Psoas muscle (tissue), 8 donors: ENCODE measurements at regions of chr19 and their contacts with region 1.

Region 1: DNA sequence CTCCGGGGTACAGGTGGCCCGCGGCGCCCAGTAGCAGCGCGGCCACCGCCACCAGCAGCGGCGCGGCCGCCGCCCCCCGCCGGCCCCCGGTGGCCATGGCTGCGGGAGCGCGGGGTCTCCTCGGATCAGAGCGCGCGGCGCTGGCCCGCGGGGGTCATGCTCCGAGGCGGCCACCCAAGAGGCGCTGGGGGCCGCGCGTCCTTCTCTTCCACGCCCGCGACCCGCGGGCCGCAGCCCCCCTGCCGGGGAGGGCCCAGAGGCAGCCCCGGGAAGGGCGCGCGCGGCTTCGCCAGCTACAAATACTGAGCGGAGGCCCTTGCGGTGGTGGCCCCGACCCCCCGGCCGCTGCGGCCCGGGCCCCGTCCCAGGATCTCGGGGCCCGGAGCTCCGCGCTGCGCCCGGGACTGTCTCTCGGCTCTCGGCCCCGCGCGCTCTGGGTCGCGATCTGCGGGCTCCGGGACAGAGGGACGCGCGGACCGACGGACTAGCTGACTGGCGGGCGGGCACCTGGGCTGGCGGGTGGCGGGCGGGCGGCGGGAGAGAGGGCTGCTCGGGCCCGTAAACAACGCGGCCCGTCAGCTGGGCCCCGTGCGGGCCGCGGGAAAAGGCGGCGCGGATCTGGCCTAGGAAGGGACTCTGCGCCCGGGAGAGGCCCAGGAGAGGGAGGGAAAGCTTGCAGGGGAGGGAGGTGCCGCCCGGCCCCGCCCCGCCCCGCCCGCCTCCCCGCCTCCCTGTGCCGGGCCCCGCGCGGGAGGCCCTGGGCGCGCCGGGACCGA is at the start of gene INSR:
- DNase-seq: peak; percentile 92 to 95
- ATAC-seq: peak; percentile 92 to 96 (median 93)
- H3K4me3 ChIP-seq: peak within 1 kb of the TSS; percentile 98
- H3K27ac ChIP-seq: peak within 1 kb of the TSS; percentile 98
- H3K4me1 ChIP-seq: peaks cover 17% of the 10 kb centered on the region
- H3K27me3 ChIP-seq: no peaks in the 10 kb centered on the region
- CTCF ChIP-seq: no peak
- total RNA-seq, gene INSR: 48.5 to 95.1 (median 66.3) TPM

Region 2: DNA sequence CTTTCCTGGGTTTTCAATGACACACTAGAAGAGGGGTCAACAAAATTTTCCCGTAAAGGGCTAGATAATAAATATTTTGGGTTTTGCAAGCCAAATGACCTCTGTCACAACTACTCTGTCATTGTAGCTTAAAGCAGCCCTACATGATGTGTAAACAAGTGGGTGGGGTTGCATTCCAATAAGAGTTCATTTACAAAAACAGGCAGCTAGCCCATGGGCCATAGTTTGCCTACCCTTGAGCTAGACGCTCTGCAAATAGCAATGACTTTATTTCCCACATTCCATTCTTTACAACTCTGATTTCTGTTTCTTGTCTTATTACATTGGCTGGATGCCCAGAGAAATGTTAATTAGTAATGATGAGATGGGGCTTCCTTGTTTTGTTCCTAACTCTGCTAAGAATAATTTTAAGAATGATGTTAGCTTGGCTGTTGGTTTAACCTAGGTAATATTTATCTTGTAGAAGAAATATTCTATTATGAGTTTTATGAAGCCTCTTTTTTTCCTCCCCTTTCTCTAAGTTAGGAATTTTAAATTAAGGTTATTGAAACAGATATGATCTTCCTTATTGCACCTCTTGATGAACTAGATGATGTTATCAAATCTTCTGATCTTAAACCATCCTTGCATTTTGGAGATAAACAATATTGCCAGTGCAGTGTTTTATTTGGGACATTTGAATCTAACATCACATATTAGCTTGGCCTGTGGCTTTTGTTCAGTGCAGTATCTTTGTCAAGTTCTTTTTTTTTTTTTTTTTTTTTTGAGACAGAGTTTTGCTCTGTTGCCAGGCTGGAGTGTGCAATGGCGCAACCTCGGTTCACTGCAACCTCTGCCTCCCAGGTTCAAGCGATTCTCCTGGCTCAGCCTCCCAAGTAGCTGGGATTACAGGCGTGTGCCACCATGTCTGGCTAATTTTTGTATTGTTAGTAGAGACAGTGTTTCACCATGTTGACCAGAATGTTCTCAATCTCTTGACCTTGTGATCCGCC is 148.2 kb before region 1 on chr19:
- intact Hi-C with region 1: loop called (anchors 5 kb)
- DNase-seq: no peak
- ATAC-seq: no peak
- H3K4me3 ChIP-seq: no peak overlapping the region
- H3K27ac ChIP-seq: peak overlapping the region; percentile 78
- H3K4me1 ChIP-seq: peaks cover 15% of the 10 kb centered on the region
- H3K27me3 ChIP-seq: no peaks in the 10 kb centered on the region
- CTCF ChIP-seq: no peak

Region 3: GRCh38 chr19:7152568-7152967 is 141.4 kb before region 1 on chr19:
- intact Hi-C with region 1: loop called (anchors 5 kb)
- DNase-seq: no peak
- ATAC-seq: peak in 2 of 4 donors; percentile 12
- H3K4me3 ChIP-seq: no peak overlapping the region
- H3K27ac ChIP-seq: peak overlapping the region; percentile 46
- H3K4me1 ChIP-seq: no peaks in the 10 kb centered on the region
- H3K27me3 ChIP-seq: no peaks in the 10 kb centered on the region
- CTCF ChIP-seq: no peak

Region 4: DNA sequence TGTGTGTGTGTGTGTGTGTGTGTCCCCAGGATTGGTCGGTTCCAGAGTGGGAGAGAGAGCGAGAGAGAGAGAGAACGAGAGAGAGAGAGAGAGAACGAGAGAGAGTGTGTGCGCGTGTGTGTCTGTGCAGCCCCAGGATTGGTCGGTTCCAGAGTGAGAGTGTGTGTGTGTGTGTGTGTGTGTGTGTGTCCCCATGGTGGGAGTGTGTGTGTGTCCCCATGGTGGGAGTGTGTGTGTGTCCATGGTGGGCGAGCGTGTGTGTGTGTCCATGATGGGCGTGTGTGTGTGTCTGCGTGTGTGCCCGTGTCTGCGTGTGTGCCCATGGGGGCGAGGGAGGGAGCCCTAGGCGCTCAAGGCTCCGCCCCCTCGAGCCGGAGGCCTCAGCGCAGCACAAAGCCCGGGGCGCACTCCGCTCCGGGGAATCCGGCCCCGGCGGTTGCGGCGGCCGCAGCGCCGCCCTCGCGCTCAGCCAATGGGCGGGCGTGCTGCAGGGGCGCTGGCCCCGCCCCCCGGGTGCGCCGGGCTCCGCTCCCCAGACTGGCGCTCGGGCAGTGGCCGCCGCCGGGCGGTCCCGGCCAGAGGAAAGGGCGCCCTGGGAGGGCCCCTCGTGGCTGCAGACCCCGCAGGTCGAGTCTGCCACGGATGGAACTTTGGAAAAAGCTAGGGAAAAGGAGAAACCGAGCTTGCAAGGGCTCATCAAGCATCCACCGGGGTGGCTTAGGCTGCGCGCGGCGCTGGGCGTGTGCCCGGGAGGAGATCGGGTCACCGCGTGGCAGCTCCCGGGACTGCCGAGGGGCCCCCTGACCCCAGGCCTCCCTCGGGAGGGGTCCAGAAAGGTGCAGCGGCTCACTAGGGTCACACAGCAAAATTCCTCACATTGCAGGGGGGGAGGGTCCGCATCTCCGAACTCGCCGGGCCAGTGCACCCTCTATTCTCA is 96.0 kb before region 1 on chr19:
- intact Hi-C with region 1: loop called (anchors 1 kb)
- DNase-seq: peak; percentile 94 to 97
- ATAC-seq: peak; percentile 89 to 95 (median 91)
- H3K4me3 ChIP-seq: peak overlapping the region; percentile 76
- H3K27ac ChIP-seq: peak overlapping the region; percentile 86
- H3K4me1 ChIP-seq: peaks cover 16% of the 10 kb centered on the region
- H3K27me3 ChIP-seq: no peaks in the 10 kb centered on the region
- CTCF ChIP-seq: peak; percentile 35

Region 5: GRCh38 chr19:7360393-7360984 is 66.5 kb after region 1 on chr19:
- intact Hi-C with region 1: no loop called
- DNase-seq: no peak
- ATAC-seq: no peak
- H3K4me3 ChIP-seq: no peak overlapping the region
- H3K27ac ChIP-seq: no peak overlapping the region
- H3K4me1 ChIP-seq: no peaks in the 10 kb centered on the region
- H3K27me3 ChIP-seq: peaks cover 0 to 9% (median 0%) of the 10 kb centered on the region in 3 donors
- CTCF ChIP-seq: no peak